IMR-90 (cell line): ENCODE measurements at regions of chr17 and their contacts with region 1.

Region 1: GRCh38 chr17:5500589-5501391 is 14.4 kb downstream of the MIS12 start:
- DNase-seq: peak; percentile 94
- ATAC-seq: peak; percentile 96
- H3K4me3 ChIP-seq: peak overlapping the region; percentile 91
- H3K27ac ChIP-seq: peak overlapping the region; percentile 77
- H3K4me1 ChIP-seq: peaks cover 4% of the 10 kb centered on the region; the same call in 1 of the 2 replicates
- H3K27me3 ChIP-seq: no peaks in the 10 kb centered on the region
- CTCF ChIP-seq: no peak
- POLR2A ChIP-seq: peak; percentile 85
- RAD21 ChIP-seq: no peak

Region 2: GRCh38 chr17:5468075-5468473 is 32.7 kb before region 1 on chr17:
- CTCF ChIA-PET with region 1: no interaction called
- POLR2A ChIA-PET with region 1: no interaction called
- dilution Hi-C with region 1: no loop called
- in situ Hi-C with region 1: no loop called
- intact Hi-C with region 1: loop called (anchors 2 kb)
- DNase-seq: no peak
- ATAC-seq: peak; percentile 4
- H3K4me3 ChIP-seq: peak overlapping the region; percentile 79
- H3K27ac ChIP-seq: peak overlapping the region; percentile 66
- H3K4me1 ChIP-seq: no peaks in the 10 kb centered on the region
- H3K27me3 ChIP-seq: no peaks in the 10 kb centered on the region
- CTCF ChIP-seq: no peak
- POLR2A ChIP-seq: no peak
- RAD21 ChIP-seq: no peak